Transverse colon (tissue), 4 donors: ENCODE measurements at regions of chr1 and their contacts with region 1.

Region 1: DNA sequence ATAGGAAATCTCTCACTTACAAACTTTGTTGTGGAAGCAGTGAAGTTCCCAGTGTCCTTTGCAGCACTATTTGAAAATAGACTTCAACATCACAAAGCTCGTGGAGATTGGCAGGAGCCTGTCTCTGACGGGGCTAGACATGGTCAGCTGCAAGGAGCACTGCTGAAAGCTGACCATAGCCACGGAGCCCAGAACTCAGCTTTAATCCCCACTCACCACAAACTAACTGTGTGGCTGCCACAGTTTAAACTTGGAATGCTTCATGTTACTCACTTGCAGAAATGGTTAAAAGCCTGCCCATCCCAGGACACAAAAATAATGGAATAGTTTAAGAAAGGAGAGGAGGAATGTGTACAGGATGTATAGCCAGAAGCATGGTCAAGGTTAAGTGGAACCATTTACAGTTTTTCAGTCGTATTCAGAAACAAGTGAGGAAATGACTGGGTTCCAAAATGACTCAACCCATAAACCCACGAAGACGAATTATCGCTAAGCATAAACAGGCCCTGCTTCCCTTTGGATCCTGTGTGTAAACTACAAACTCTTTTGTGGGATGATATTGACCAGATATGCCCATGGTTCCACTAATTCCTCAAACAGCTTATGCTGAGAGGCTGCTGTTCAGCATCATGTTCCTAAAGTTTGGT is 18.2 kb downstream of the DNALI1 start:
- DNase-seq: no peak
- H3K4me3 ChIP-seq: no peak overlapping the region
- H3K27ac ChIP-seq: peak overlapping the region; percentile 25 to 72 (median 57)
- H3K4me1 ChIP-seq: peaks cover 0 to 9% (median 0%) of the 10 kb centered on the region in 4 donors
- H3K27me3 ChIP-seq: no peaks in the 10 kb centered on the region
- CTCF ChIP-seq: no peak
- EP300 ChIP-seq: peak; percentile 63
- POLR2A ChIP-seq: no peak

Region 2: DNA sequence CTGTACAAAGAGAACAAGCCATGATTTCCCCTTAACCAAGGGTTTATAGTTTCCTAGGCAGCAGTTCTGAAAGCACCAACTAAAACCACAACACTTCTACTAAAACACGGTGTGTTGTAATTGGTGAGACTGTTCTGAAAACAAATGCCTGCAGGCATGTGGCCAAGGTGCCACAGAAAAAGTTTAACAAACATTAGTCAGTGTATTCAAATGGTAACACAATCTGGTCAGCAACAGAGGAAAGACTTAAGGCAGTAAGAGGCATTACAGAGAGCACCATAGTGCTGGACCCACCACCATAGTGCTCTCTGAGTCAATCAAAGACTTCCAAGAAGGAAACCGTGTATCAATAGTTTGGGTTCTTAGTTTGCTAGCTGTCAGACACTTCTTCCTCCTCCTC is 37.6 kb before region 1 on chr1:
- in situ Hi-C with region 1: no loop called
- intact Hi-C with region 1: loop called (anchors 2 kb)
- DNase-seq: no peak
- H3K4me3 ChIP-seq: no peak overlapping the region
- H3K27ac ChIP-seq: no peak overlapping the region
- H3K4me1 ChIP-seq: peaks cover 0 to 13% (median 7%) of the 10 kb centered on the region in 4 donors
- H3K27me3 ChIP-seq: no peaks in the 10 kb centered on the region
- CTCF ChIP-seq: no peak
- EP300 ChIP-seq: no peak
- POLR2A ChIP-seq: no peak